CD8-positive, alpha-beta T cell (primary cell): ENCODE measurements at regions of chr6 and their contacts with region 1.

Region 1: GRCh38 chr6:149746147-149746946 is at the start of gene NUP43:
- DNase-seq: peak; percentile 85 to 95 (median 93)
- ATAC-seq: peak; percentile 74
- H3K4me3 ChIP-seq: peak within 1 kb of the TSS; percentile 69 to 79
- H3K4me3 Mint-ChIP-seq: peak within 1 kb of the TSS; percentile 97
- H3K27ac ChIP-seq: peak within 1 kb of the TSS; percentile 55 to 58
- H3K27ac Mint-ChIP-seq: peak within 1 kb of the TSS; percentile 94
- H3K4me1 ChIP-seq: peaks cover 31% of the 10 kb centered on the region
- H3K4me1 Mint-ChIP-seq: peaks cover 30% of the 10 kb centered on the region
- H3K27me3 ChIP-seq: no peaks in the 10 kb centered on the region
- H3K27me3 Mint-ChIP-seq: no peaks in the 10 kb centered on the region
- CTCF ChIP-seq: peak; percentile 54
- total RNA-seq, gene NUP43: 9.7 to 10.3 TPM

Region 2: GRCh38 chr6:149648148-149649145 is 97.9 kb before region 1 on chr6 and contains the start of gene KATNA1:
- CTCF ChIA-PET with region 1: interaction called, 3 read pairs
- POLR2A ChIA-PET with region 1: no interaction called
- intact Hi-C with region 1: loop called (anchors 1 to 2 kb)
- DNase-seq: peak; percentile 65 to 91 (median 84)
- ATAC-seq: peak; percentile 91
- H3K4me3 ChIP-seq: peak within 1 kb of the TSS; percentile 78 to 97
- H3K4me3 Mint-ChIP-seq: peak within 1 kb of the TSS; percentile 90
- H3K27ac ChIP-seq: peak within 1 kb of the TSS; percentile 77 to 90
- H3K27ac Mint-ChIP-seq: peak within 1 kb of the TSS; percentile 63
- H3K4me1 ChIP-seq: peaks cover 30% of the 10 kb centered on the region
- H3K4me1 Mint-ChIP-seq: peaks cover 37% of the 10 kb centered on the region
- H3K27me3 ChIP-seq: no peaks in the 10 kb centered on the region
- H3K27me3 Mint-ChIP-seq: no peaks in the 10 kb centered on the region
- CTCF ChIP-seq: no peak
- total RNA-seq, gene KATNA1: 18.0 to 20.8 TPM

Region 3: GRCh38 chr6:149723771-149724417 is 22.5 kb before region 1 on chr6:
- CTCF ChIA-PET with region 1: interaction called, 18 read pairs
- POLR2A ChIA-PET with region 1: interaction called, 15 read pairs
- intact Hi-C with region 1: no loop called
- DNase-seq: peak in 8 of 9 experiments; percentile 27 to 69 (median 44)
- ATAC-seq: peak; percentile 94
- H3K4me3 ChIP-seq: no peak overlapping the region
- H3K4me3 Mint-ChIP-seq: no peak overlapping the region
- H3K27ac ChIP-seq: no peak overlapping the region
- H3K27ac Mint-ChIP-seq: no peak overlapping the region
- H3K4me1 ChIP-seq: peaks cover 13% of the 10 kb centered on the region
- H3K4me1 Mint-ChIP-seq: peaks cover 18% of the 10 kb centered on the region
- H3K27me3 ChIP-seq: no peaks in the 10 kb centered on the region
- H3K27me3 Mint-ChIP-seq: no peaks in the 10 kb centered on the region
- CTCF ChIP-seq: peak; percentile 69

Region 4: GRCh38 chr6:149925974-149926777 is 179.8 kb after region 1 on chr6:
- CTCF ChIA-PET with region 1: no interaction called
- POLR2A ChIA-PET with region 1: no interaction called
- intact Hi-C with region 1: loop called in 1 of 2 experiments (anchors 10 kb)
- DNase-seq: peak; percentile 46 to 79 (median 72)
- ATAC-seq: peak; percentile 57
- H3K4me3 ChIP-seq: peak overlapping the region in 1 of 2 experiments; percentile 38
- H3K4me3 Mint-ChIP-seq: no peak overlapping the region
- H3K27ac ChIP-seq: no peak overlapping the region
- H3K27ac Mint-ChIP-seq: no peak overlapping the region
- H3K4me1 ChIP-seq: peaks cover 17% of the 10 kb centered on the region
- H3K4me1 Mint-ChIP-seq: peaks cover 34% of the 10 kb centered on the region
- H3K27me3 ChIP-seq: peaks cover 31 to 50% of the 10 kb centered on the region in 2 experiments
- H3K27me3 Mint-ChIP-seq: peaks cover 81% of the 10 kb centered on the region
- CTCF ChIP-seq: peak; percentile 78